ENCODE measurements at regions of chr6 and their contacts with region 1.

Region 1: GRCh38 chr6:138817822-138818308 is 22.0 kb downstream of the ECT2L start:
- DNase-seq: peak; percentile 99
- ATAC-seq: peak; percentile 93
- H3K4me3 ChIP-seq: peak overlapping the region in 1 of 2 experiments; percentile 23; a peak in 2 of 4 replicates
- H3K27ac ChIP-seq: peak overlapping the region; percentile 77
- H3K4me1 ChIP-seq: peaks cover 28 to 44% of the 10 kb centered on the region in 2 experiments
- H3K27me3 ChIP-seq: no peaks in the 10 kb centered on the region
- CTCF ChIP-seq: no peak
- POLR2A ChIP-seq: no peak
- RAD21 ChIP-seq: peak; percentile 53

Region 2: GRCh38 chr6:138012682-138013081 is 805.2 kb before region 1 on chr6:
- CTCF ChIA-PET with region 1: no interaction called
- POLR2A ChIA-PET with region 1: no interaction called
- RAD21 ChIA-PET with region 1: no interaction called
- intact Hi-C with region 1: no loop called
- DNase-seq: no peak
- ATAC-seq: no peak
- H3K4me3 ChIP-seq: no peak overlapping the region
- H3K27ac ChIP-seq: no peak overlapping the region
- H3K4me1 ChIP-seq: no peaks in the 10 kb centered on the region
- H3K27me3 ChIP-seq: no peaks in the 10 kb centered on the region
- CTCF ChIP-seq: no peak
- POLR2A ChIP-seq: no peak
- RAD21 ChIP-seq: no peak

Region 3: DNA sequence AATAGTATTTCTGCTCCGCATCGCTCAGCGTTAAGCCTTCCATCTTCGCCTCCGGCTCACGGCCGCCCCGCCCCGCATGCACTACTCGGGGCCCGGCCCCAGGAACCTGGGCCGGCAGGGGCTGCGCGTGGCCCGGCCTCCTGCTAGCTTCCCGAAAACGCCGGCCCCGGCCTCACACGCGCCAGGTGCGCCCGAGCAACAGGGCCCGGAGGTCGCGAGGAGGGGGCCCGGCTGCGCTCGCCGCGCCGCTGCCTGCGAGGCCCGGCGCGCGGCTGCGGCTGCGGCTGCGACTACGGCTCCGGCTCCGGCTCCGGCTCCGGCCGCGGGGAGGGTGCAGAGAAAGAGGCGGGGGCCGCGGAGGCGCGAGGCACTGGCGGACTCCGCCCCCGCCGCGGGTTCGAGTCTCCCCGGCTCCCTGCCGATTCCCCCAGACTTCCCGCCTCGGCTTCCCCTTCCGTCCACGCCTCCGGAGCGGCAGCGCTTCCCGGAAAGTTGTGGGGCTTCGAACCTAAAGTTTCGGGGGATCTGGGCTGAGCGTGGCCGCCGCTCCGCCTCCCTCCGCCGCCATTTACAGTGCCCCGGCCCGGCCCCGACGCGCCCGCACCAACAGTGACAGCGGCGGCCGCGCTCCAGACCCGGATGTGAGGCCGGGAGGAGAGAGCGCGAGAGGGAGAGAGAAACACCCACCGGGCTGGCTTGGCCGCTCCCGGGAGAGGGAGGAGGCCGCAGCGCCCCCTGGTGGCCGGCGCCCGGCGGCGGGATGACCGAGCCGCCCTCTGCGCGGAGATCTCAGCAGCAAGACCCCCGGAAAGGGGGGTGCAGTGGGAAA is 170.0 kb after region 1 on chr6 and contains the start of gene REPS1:
- CTCF ChIA-PET with region 1: interaction called, 3 read pairs
- POLR2A ChIA-PET with region 1: no interaction called
- RAD21 ChIA-PET with region 1: no interaction called
- intact Hi-C with region 1: loop called (anchors 1 kb)
- DNase-seq: peak; percentile 78
- ATAC-seq: peak; percentile 90
- H3K4me3 ChIP-seq: peak within 1 kb of the TSS; percentile 81 to 83
- H3K27ac ChIP-seq: peak within 1 kb of the TSS; percentile 72
- H3K4me1 ChIP-seq: peaks cover 16 to 36% of the 10 kb centered on the region in 2 experiments; a peak in 3 of 4 replicates
- H3K27me3 ChIP-seq: no peaks in the 10 kb centered on the region
- CTCF ChIP-seq: peak; percentile 73 to 82 (median 80)
- POLR2A ChIP-seq: peak; percentile 29
- RAD21 ChIP-seq: peak; percentile 80
- total RNA-seq, gene REPS1: 52.7 TPM

Region 4: GRCh38 chr6:139109558-139109957 is 291.7 kb after region 1 on chr6:
- CTCF ChIA-PET with region 1: no interaction called
- POLR2A ChIA-PET with region 1: no interaction called
- RAD21 ChIA-PET with region 1: no interaction called
- intact Hi-C with region 1: loop called (anchors 2 kb)
- DNase-seq: peak; percentile 32
- ATAC-seq: peak; percentile 86
- H3K4me3 ChIP-seq: no peak overlapping the region
- H3K27ac ChIP-seq: no peak overlapping the region
- H3K4me1 ChIP-seq: no peaks in the 10 kb centered on the region
- H3K27me3 ChIP-seq: no peaks in the 10 kb centered on the region
- CTCF ChIP-seq: peak; percentile 9 to 51 (median 44); a peak in 3 of 6 replicates
- POLR2A ChIP-seq: no peak
- RAD21 ChIP-seq: peak; percentile 58

Region 5: DNA sequence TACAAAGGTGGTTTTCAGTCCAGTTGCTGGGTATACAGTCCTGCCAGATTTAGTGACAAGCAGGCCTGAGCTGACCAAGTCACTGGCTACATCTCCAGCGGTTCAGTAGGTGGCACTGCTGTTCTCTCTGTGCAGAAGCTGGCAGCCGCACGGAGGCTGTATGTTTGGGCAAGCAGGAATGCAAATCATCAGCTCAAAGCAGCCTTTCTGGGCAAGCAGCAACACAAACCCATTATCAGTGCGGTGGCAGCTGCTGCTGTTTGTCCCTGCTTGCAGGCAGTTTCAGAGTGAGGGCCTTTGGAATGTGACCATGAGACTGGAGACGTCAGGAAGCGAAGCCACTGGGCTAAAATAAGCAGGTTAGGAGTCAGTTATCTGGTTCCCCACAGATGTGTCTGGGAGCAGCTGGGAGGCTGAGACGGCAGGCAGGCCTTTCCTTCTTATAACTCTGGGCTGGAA is 401.4 kb after region 1 on chr6:
- CTCF ChIA-PET with region 1: interaction called, 4 read pairs
- POLR2A ChIA-PET with region 1: no interaction called
- RAD21 ChIA-PET with region 1: no interaction called
- intact Hi-C with region 1: loop called (anchors 5 kb)
- DNase-seq: peak; percentile 73
- ATAC-seq: peak; percentile 100
- H3K4me3 ChIP-seq: no peak overlapping the region
- H3K27ac ChIP-seq: no peak overlapping the region
- H3K4me1 ChIP-seq: peaks cover 0 to 3% of the 10 kb centered on the region in 2 experiments; a peak in 1 of 4 replicates
- H3K27me3 ChIP-seq: no peaks in the 10 kb centered on the region
- CTCF ChIP-seq: peak; percentile 63 to 77 (median 72); a peak in 5 of 6 replicates
- POLR2A ChIP-seq: no peak
- RAD21 ChIP-seq: peak; percentile 90